ENCODE measurements at regions of chr10 and their contacts with region 1.

Region 1: DNA sequence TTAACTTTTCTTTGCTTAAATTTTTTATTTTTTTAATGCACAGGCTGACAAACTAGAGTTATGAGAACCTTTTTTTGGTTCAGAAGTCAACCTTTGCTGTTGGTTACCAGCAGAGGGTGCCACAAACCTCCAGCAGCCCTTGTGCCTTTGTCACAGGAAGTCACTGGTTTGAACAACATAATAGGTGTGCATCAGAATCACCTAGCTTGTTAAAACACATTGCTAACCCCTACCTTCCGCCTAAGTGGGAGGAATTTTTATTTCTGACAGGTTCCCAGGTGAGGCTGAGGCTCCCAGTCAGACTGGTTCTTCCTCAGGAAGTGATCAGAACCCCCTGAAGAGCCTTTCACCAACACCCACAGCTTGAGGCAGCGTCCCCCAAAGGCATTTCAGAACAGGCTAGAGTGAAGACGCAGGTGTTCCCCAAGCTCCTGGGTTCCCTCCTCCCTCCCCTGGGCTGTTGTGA is 22.6 kb upstream of the VDAC2 start:
- DNase-seq: peak in 6 of 7 donors; percentile 53 to 79 (median 72)
- H3K4me3 ChIP-seq: no peak overlapping the region
- H3K27ac ChIP-seq: peak overlapping the region in 2 of 5 donors; percentile 2 to 68
- H3K4me1 ChIP-seq: peaks cover 8 to 19% of the 10 kb centered on the region in 2 donors
- H3K27me3 ChIP-seq: no peaks in the 10 kb centered on the region
- CTCF ChIP-seq: peak; percentile 47 to 76 (median 68)
- POLR2A ChIP-seq: no peak

Region 2: GRCh38 chr10:75019370-75019769 is 168.6 kb before region 1 on chr10:
- intact Hi-C with region 1: no loop called
- DNase-seq: no peak
- H3K4me3 ChIP-seq: no peak overlapping the region
- H3K27ac ChIP-seq: no peak overlapping the region
- H3K4me1 ChIP-seq: peaks cover 0 to 17% of the 10 kb centered on the region in 2 donors
- H3K27me3 ChIP-seq: no peaks in the 10 kb centered on the region
- CTCF ChIP-seq: peak in 4 of 6 experiments; percentile 25 to 47 (median 37)
- POLR2A ChIP-seq: no peak

Region 3: GRCh38 chr10:75111367-75111906 is 76.6 kb before region 1 on chr10 and contains the start of gene SAMD8:
- intact Hi-C with region 1: loop called (anchors 10 kb)
- DNase-seq: peak; percentile 95 to 99 (median 98)
- H3K4me3 ChIP-seq: peak within 1 kb of the TSS; percentile 51 to 99 (median 81)
- H3K27ac ChIP-seq: peak within 1 kb of the TSS; percentile 94 to 98 (median 97)
- H3K4me1 ChIP-seq: peaks cover 7 to 47% of the 10 kb centered on the region in 2 donors
- H3K27me3 ChIP-seq: no peaks in the 10 kb centered on the region
- CTCF ChIP-seq: peak; percentile 19 to 63 (median 40)
- POLR2A ChIP-seq: peak; percentile 72 to 88
- total RNA-seq, gene SAMD8: 23.9 to 48.7 (median 32.6) TPM